ENCODE measurements at regions of chr10 and their contacts with region 1.

Region 1: GRCh38 chr10:89793649-89794254 is 92.4 kb downstream of the KIF20B start:
- DNase-seq: peak; percentile 59
- H3K4me3 ChIP-seq: no peak overlapping the region
- H3K27ac ChIP-seq: no peak overlapping the region
- H3K4me1 ChIP-seq: peaks cover 21% of the 10 kb centered on the region
- H3K27me3 ChIP-seq: no peaks in the 10 kb centered on the region
- CTCF ChIP-seq: peak; percentile 69 to 78

Region 2: GRCh38 chr10:89426230-89426868 is 367.4 kb before region 1 on chr10:
- CTCF ChIA-PET with region 1: no interaction called
- dilution Hi-C with region 1: no loop called
- in situ Hi-C with region 1: no loop called
- intact Hi-C with region 1: loop called (anchors 5 kb)
- DNase-seq: peak; percentile 50
- H3K4me3 ChIP-seq: no peak overlapping the region
- H3K27ac ChIP-seq: no peak overlapping the region
- H3K4me1 ChIP-seq: peaks cover 31% of the 10 kb centered on the region
- H3K27me3 ChIP-seq: no peaks in the 10 kb centered on the region
- CTCF ChIP-seq: peak; percentile 76 to 80

Region 3: GRCh38 chr10:90007226-90007625 is 213.5 kb after region 1 on chr10:
- CTCF ChIA-PET with region 1: no interaction called
- dilution Hi-C with region 1: no loop called
- in situ Hi-C with region 1: no loop called
- intact Hi-C with region 1: loop called (anchors 1 kb)
- DNase-seq: peak; percentile 98
- H3K4me3 ChIP-seq: no peak overlapping the region
- H3K27ac ChIP-seq: peak overlapping the region; percentile 92
- H3K4me1 ChIP-seq: peaks cover 18% of the 10 kb centered on the region
- H3K27me3 ChIP-seq: no peaks in the 10 kb centered on the region
- CTCF ChIP-seq: peak; percentile 62 to 89

Region 4: GRCh38 chr10:90148116-90148855 is 354.5 kb after region 1 on chr10:
- CTCF ChIA-PET with region 1: no interaction called
- dilution Hi-C with region 1: loop called (anchors 25 kb)
- in situ Hi-C with region 1: no loop called
- intact Hi-C with region 1: no loop called
- DNase-seq: peak; percentile 78
- H3K4me3 ChIP-seq: no peak overlapping the region
- H3K27ac ChIP-seq: peak overlapping the region; percentile 4
- H3K4me1 ChIP-seq: peaks cover 24% of the 10 kb centered on the region
- H3K27me3 ChIP-seq: no peaks in the 10 kb centered on the region
- CTCF ChIP-seq: peak; percentile 57 to 74

Region 5: DNA sequence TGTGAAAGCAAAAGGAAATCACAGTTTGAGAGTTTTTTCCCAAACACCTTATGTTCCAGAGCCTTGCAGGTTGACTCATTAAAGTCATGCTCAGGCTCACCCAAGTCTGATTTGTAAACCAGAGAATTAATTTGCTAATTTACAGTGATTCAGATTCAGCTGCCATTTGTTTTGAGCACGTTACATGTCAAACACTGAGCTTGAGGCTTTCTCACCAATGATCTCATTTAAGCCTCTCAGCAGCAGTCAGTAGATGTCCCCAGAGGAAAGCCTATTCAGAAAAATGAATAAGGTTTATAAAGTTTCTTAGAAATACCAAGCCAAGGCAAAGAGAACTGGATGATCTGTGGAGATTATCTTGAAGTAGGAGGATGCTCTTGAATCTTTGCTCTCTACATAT is 643.7 kb after region 1 on chr10:
- CTCF ChIA-PET with region 1: no interaction called
- dilution Hi-C with region 1: no loop called
- in situ Hi-C with region 1: no loop called
- intact Hi-C with region 1: loop called (anchors 1 kb)
- DNase-seq: peak; percentile 31
- H3K4me3 ChIP-seq: no peak overlapping the region
- H3K27ac ChIP-seq: no peak overlapping the region
- H3K4me1 ChIP-seq: no peaks in the 10 kb centered on the region
- H3K27me3 ChIP-seq: no peaks in the 10 kb centered on the region
- CTCF ChIP-seq: peak in 1 of 2 donors; percentile 41

Region 6: GRCh38 chr10:90652519-90652918 is 858.8 kb after region 1 on chr10:
- CTCF ChIA-PET with region 1: no interaction called
- dilution Hi-C with region 1: no loop called
- in situ Hi-C with region 1: no loop called
- intact Hi-C with region 1: loop called (anchors 2 kb)
- DNase-seq: peak; percentile 37
- H3K4me3 ChIP-seq: no peak overlapping the region
- H3K27ac ChIP-seq: no peak overlapping the region
- H3K4me1 ChIP-seq: no peaks in the 10 kb centered on the region
- H3K27me3 ChIP-seq: no peaks in the 10 kb centered on the region
- CTCF ChIP-seq: peak; percentile 60 to 73

Region 7: DNA sequence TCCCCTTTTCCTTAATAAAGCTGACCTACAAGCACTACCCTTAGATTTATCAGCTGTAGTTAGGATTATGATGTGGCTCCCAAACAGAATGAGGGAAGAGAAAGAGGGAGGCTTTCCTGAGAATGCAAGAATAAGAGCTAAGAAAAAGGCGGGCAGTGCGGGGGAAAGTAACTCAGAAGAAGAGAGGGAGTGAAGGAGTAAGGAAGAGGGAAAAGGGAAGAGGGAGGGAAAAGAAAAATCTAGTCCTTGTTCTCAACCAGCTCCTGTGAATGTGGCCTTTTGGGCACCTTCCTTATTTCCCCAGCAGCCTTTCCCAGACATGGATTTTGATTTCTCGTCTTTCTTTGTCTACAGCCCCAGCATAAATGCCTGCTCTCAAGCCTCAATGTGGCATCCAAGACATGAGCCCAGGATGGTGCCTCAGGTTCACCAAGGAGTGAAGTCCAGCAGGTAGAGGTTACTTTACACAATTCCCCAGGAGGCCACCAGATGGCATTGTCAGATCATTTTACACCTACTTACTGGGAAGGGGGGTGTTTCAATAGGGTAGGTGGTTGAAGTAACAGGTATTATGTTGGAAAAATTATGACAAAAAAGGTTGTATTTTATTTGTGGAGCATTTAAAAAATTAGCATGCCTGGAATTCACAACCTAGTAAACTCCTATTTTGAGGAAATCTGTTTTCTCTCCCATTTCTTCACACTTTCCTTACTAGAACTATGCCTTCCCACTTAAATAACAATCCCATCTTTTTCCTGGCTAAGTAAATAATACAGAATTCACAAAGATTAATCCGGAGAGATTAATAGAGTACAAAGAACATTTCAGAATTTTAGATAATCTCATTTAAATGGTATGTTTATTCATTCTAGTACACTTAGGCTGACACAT is 957.6 kb after region 1 on chr10:
- CTCF ChIA-PET with region 1: no interaction called
- dilution Hi-C with region 1: no loop called
- in situ Hi-C with region 1: loop called in 1 of 2 experiments (anchors 25 kb)
- intact Hi-C with region 1: loop called (anchors 2 kb)
- DNase-seq: peak; percentile 46
- H3K4me3 ChIP-seq: no peak overlapping the region
- H3K27ac ChIP-seq: no peak overlapping the region
- H3K4me1 ChIP-seq: peaks cover 5% of the 10 kb centered on the region
- H3K27me3 ChIP-seq: no peaks in the 10 kb centered on the region
- CTCF ChIP-seq: peak; percentile 71 to 85